ENCODE measurements at regions of chr4 and their contacts with region 1.

Region 1: GRCh38 chr4:89904524-89904923 is 9.9 kb downstream of the MMRN1 start:
- H3K4me3 Mint-ChIP-seq: no peak overlapping the region
- H3K27ac Mint-ChIP-seq: no peak overlapping the region
- H3K4me1 Mint-ChIP-seq: no peaks in the 10 kb centered on the region
- H3K27me3 Mint-ChIP-seq: no peaks in the 10 kb centered on the region

Region 2: DNA sequence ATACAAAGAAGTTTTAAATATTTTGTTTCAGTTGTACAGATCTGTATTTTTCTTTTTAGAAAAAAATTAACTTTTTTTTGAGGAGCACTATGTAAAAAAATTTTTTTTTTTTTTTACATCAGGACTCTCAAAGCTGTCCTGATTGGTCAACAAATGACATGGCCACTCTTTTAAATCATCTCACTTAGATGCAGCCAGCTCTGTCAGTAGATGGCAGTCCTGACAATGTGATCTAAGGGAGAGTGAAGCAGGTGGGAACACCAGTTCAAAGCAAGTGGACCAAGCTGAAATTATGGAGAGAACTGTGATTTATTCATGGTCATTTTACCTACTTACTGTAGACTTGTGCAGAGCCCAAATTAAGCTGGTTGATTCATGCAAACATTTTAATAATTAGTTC is 422.3 kb before region 1 on chr4:
- intact Hi-C with region 1: loop called (anchors 5 kb)
- H3K4me3 Mint-ChIP-seq: no peak overlapping the region
- H3K27ac Mint-ChIP-seq: no peak overlapping the region
- H3K4me1 Mint-ChIP-seq: no peaks in the 10 kb centered on the region
- H3K27me3 Mint-ChIP-seq: no peaks in the 10 kb centered on the region

Region 3: GRCh38 chr4:89586864-89587263 is 317.7 kb before region 1 on chr4:
- intact Hi-C with region 1: loop called (anchors 5 kb)
- H3K4me3 Mint-ChIP-seq: no peak overlapping the region
- H3K27ac Mint-ChIP-seq: no peak overlapping the region
- H3K4me1 Mint-ChIP-seq: no peaks in the 10 kb centered on the region
- H3K27me3 Mint-ChIP-seq: no peaks in the 10 kb centered on the region

Region 4: GRCh38 chr4:89664521-89664920 is 240.0 kb before region 1 on chr4:
- intact Hi-C with region 1: no loop called
- H3K4me3 Mint-ChIP-seq: no peak overlapping the region
- H3K27ac Mint-ChIP-seq: no peak overlapping the region
- H3K4me1 Mint-ChIP-seq: no peaks in the 10 kb centered on the region
- H3K27me3 Mint-ChIP-seq: no peaks in the 10 kb centered on the region

Region 5: GRCh38 chr4:89829470-89830138 is 74.9 kb before region 1 on chr4:
- intact Hi-C with region 1: no loop called
- H3K4me3 Mint-ChIP-seq: peak overlapping the region; percentile 35
- H3K27ac Mint-ChIP-seq: peak overlapping the region; percentile 70
- H3K4me1 Mint-ChIP-seq: peaks cover 22% of the 10 kb centered on the region
- H3K27me3 Mint-ChIP-seq: no peaks in the 10 kb centered on the region

Region 6: GRCh38 chr4:89868999-89869589 is 35.4 kb before region 1 on chr4:
- intact Hi-C with region 1: no loop called
- H3K4me3 Mint-ChIP-seq: no peak overlapping the region
- H3K27ac Mint-ChIP-seq: no peak overlapping the region
- H3K4me1 Mint-ChIP-seq: no peaks in the 10 kb centered on the region
- H3K27me3 Mint-ChIP-seq: no peaks in the 10 kb centered on the region

Region 7: GRCh38 chr4:90061881-90062280 is 157.4 kb after region 1 on chr4:
- intact Hi-C with region 1: no loop called
- H3K4me3 Mint-ChIP-seq: no peak overlapping the region
- H3K27ac Mint-ChIP-seq: no peak overlapping the region
- H3K4me1 Mint-ChIP-seq: peaks cover 8% of the 10 kb centered on the region
- H3K27me3 Mint-ChIP-seq: no peaks in the 10 kb centered on the region